ENCODE measurements at regions of chr7 and their contacts with region 1.

Region 1: GRCh38 chr7:21253740-21254687 is 173.9 kb upstream of the SP4 start:
- DNase-seq: peak; percentile 68
- H3K4me3 Mint-ChIP-seq: no peak overlapping the region
- H3K27ac Mint-ChIP-seq: no peak overlapping the region
- H3K4me1 Mint-ChIP-seq: peaks cover 2% of the 10 kb centered on the region
- H3K27me3 Mint-ChIP-seq: peaks cover 54% of the 10 kb centered on the region

Region 2: GRCh38 chr7:19747740-19748339 is 1506.2 kb before region 1 on chr7:
- CTCF ChIA-PET with region 1: no interaction called
- intact Hi-C with region 1: loop called (anchors 5 kb)
- DNase-seq: no peak
- H3K4me3 Mint-ChIP-seq: no peak overlapping the region
- H3K27ac Mint-ChIP-seq: no peak overlapping the region
- H3K4me1 Mint-ChIP-seq: no peaks in the 10 kb centered on the region
- H3K27me3 Mint-ChIP-seq: peaks cover 7% of the 10 kb centered on the region

Region 3: DNA sequence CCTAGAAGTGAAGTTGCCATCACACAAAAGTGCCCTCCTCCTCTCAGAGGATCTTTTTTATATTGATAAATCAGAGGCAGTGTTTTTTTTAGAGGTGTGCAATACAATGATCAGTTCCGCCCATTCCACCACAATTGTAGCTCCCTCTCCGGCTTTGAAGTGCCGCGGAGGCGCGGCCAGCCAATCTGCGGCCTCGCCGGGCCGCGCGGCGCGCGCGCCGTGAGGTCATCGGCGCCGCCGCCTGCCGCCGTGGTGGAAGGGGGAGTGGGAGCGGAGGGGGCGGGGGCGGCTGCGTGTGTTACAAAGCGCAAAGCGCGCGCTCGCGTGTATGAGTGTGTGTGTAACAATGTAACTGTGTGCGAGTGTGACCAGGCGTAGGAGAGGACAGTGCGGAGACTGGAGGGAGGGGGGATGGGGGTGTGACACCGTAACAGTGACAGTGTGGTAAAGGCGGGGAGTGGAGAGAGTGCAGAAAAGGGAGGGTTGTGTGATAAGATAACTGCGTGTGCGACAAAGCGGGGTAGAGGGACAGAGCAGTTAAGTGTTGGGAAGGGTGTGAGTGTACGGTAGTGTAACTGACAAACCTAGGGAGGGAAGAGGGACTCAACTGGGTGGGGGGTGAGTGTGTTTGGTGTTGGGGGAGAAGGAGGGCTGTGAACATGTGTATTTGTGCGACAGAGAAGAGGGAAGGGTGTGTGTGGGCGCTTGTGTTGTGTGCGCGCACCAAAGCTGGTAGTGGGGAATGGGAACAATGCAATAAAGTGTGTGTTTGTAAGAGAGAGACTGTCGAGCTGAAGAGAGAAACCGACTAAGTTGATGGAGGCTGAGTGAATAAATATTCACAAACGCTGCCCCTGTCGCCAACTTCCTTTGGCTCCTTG is 467.0 kb before region 1 on chr7 and contains the start of gene SP8:
- CTCF ChIA-PET with region 1: no interaction called
- intact Hi-C with region 1: loop called (anchors 1 kb)
- DNase-seq: peak; percentile 38
- H3K4me3 Mint-ChIP-seq: peak within 1 kb of the TSS; percentile 69
- H3K27ac Mint-ChIP-seq: no peak within 1 kb of the TSS
- H3K4me1 Mint-ChIP-seq: peaks cover 27% of the 10 kb centered on the region
- H3K27me3 Mint-ChIP-seq: peaks cover 75% of the 10 kb centered on the region
- total RNA-seq, gene SP8: 0.07 TPM in 1 of 2 experiments, not detected in the other

Region 4: GRCh38 chr7:20991544-20991943 is 262.5 kb before region 1 on chr7:
- CTCF ChIA-PET with region 1: no interaction called
- intact Hi-C with region 1: loop called (anchors 10 kb)
- DNase-seq: no peak
- H3K4me3 Mint-ChIP-seq: no peak overlapping the region
- H3K27ac Mint-ChIP-seq: no peak overlapping the region
- H3K4me1 Mint-ChIP-seq: no peaks in the 10 kb centered on the region
- H3K27me3 Mint-ChIP-seq: peaks cover 3% of the 10 kb centered on the region

Region 5: DNA sequence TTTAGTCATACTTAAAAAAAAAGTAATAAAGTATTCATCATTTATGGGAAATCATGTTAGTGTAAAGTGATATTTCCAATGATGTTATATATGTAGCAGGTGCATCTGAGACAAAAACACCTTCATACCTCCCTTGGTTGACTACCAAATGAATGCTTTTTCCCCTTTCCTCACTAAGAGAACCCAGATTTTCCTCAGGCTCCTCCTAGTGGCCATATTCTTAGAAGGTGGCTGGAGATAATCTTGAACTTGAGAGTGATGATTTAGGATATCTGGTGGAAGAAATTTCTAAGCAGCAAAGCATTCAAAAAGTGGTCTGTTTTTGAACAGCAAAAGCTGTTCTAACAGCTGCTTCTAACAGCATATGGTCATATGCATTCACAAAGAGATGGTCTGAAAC is 272.0 kb after region 1 on chr7:
- CTCF ChIA-PET with region 1: no interaction called
- intact Hi-C with region 1: loop called (anchors 1 kb)
- DNase-seq: no peak
- H3K4me3 Mint-ChIP-seq: no peak overlapping the region
- H3K27ac Mint-ChIP-seq: no peak overlapping the region
- H3K4me1 Mint-ChIP-seq: no peaks in the 10 kb centered on the region
- H3K27me3 Mint-ChIP-seq: no peaks in the 10 kb centered on the region

Region 6: GRCh38 chr7:21671859-21672258 is 417.8 kb after region 1 on chr7:
- CTCF ChIA-PET with region 1: no interaction called
- intact Hi-C with region 1: no loop called
- DNase-seq: peak; percentile 4
- H3K4me3 Mint-ChIP-seq: no peak overlapping the region
- H3K27ac Mint-ChIP-seq: no peak overlapping the region
- H3K4me1 Mint-ChIP-seq: peaks cover 6% of the 10 kb centered on the region
- H3K27me3 Mint-ChIP-seq: no peaks in the 10 kb centered on the region

Region 7: GRCh38 chr7:21767300-21767900 is 513.4 kb after region 1 on chr7:
- CTCF ChIA-PET with region 1: interaction called, 4 read pairs
- intact Hi-C with region 1: loop called (anchors 1 kb)
- DNase-seq: peak; percentile 59
- H3K4me3 Mint-ChIP-seq: no peak overlapping the region
- H3K27ac Mint-ChIP-seq: no peak overlapping the region
- H3K4me1 Mint-ChIP-seq: peaks cover 16% of the 10 kb centered on the region
- H3K27me3 Mint-ChIP-seq: no peaks in the 10 kb centered on the region

Region 8: GRCh38 chr7:22082886-22083703 is 829.1 kb after region 1 on chr7:
- CTCF ChIA-PET with region 1: no interaction called
- intact Hi-C with region 1: loop called (anchors 1 kb)
- DNase-seq: peak; percentile 85
- H3K4me3 Mint-ChIP-seq: peak overlapping the region; percentile 71
- H3K27ac Mint-ChIP-seq: no peak overlapping the region
- H3K4me1 Mint-ChIP-seq: peaks cover 11% of the 10 kb centered on the region
- H3K27me3 Mint-ChIP-seq: peaks cover 20% of the 10 kb centered on the region